ENCODE measurements at regions of chr17 and their contacts with region 1.

Region 1: DNA sequence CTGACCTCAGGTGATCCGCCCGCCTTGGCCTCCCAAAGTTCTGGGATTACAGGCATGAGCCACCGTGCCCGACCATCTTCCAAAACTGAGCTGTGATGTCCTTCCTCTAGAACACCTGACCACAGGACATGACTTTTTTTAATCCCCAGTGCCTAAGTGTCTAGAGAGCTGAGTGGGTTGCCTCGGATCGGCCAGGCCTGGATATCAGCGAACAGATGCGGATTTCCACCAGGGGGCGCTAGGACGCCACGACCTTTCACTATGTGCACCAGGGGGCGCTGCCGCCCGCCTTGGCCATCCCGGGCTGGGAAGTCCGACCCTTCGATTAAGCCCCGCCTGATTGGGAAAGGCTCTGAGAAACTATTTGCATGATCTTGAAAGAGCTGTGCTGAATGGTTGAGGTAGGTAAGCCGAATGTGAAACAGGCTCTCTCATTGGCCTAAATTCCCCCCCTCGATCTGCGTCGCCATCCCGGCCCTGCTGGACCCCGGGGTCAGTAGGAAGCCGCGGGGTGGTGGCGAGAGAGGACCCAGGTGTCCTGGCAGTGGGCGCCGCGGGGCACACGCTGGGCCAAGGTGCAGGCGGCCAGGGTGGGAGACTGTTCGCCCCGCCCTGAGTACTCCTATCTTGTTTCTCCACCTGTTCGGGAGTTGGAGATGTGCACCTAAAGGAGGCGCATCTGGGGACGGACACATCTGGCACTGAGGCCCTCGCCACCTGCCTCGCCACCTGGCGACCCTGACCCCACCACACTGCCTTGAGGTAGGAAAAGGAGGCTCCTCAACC is at the start of gene ACBD4:
- DNase-seq: peak; percentile 98
- H3K4me3 ChIP-seq: peak within 1 kb of the TSS; percentile 3 to 69 (median 53)
- H3K27ac ChIP-seq: peak within 1 kb of the TSS; percentile 14
- H3K4me1 ChIP-seq: peaks cover 17% of the 10 kb centered on the region
- H3K27me3 ChIP-seq: no peaks in the 10 kb centered on the region
- CTCF ChIP-seq: peak; percentile 100
- POLR2A ChIP-seq: peak; percentile 50
- total RNA-seq, gene ACBD4: 6.7 and 7.5 TPM in 2 replicates

Region 2: GRCh38 chr17:44518032-44518431 is 617.4 kb before region 1 on chr17:
- CTCF ChIA-PET with region 1: no interaction called
- POLR2A ChIA-PET with region 1: no interaction called
- dilution Hi-C with region 1: no loop called
- intact Hi-C with region 1: no loop called
- DNase-seq: no peak
- H3K4me3 ChIP-seq: no peak overlapping the region
- H3K27ac ChIP-seq: no peak overlapping the region
- H3K4me1 ChIP-seq: no peaks in the 10 kb centered on the region
- H3K27me3 ChIP-seq: peaks cover 2% of the 10 kb centered on the region in 2 experiments
- CTCF ChIP-seq: no peak
- POLR2A ChIP-seq: no peak

Region 3: DNA sequence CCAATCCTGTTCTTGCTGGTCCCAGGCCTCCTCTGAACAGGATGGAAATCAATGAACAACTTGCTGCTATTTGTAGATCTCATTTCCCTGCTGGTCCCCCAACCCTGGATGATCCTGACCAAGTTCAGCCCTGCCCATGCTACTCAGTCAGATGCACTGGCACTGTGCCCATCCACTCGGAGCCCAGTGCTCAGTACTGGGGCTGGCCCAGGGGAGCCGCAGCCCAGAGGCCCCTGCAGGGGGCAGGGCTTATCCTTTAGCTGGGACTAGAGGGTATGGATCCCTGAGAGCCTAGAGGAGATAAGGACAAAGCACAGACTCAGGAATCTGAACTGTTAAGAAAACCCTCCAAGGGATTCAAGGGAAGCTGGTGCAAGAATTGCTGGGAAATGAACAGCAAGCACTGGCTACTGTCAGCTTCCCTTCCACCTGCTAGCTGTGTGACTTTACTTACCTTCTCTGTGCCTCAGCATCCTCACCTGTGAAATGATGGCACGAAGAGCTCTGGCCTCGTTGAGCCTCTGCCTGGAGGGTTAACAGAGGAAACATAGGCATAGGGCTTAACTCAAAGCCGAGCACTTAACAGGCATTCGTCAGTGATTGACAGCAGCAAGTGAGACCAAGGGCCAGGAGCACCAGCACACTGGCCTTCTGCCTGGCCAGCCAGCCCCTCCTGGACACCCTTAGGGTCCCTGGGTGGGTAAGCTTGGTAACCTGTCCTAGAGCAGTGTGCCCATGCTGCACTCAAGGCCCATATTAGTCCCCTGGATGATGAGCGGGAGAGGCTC is 137.5 kb before region 1 on chr17:
- CTCF ChIA-PET with region 1: no interaction called
- POLR2A ChIA-PET with region 1: no interaction called
- dilution Hi-C with region 1: no loop called
- intact Hi-C with region 1: no loop called
- DNase-seq: no peak
- H3K4me3 ChIP-seq: no peak overlapping the region
- H3K27ac ChIP-seq: no peak overlapping the region
- H3K4me1 ChIP-seq: no peaks in the 10 kb centered on the region
- H3K27me3 ChIP-seq: peaks cover 0 to 16% of the 10 kb centered on the region in 2 experiments
- CTCF ChIP-seq: no peak
- POLR2A ChIP-seq: no peak

Region 4: GRCh38 chr17:45021607-45022287 is 113.6 kb before region 1 on chr17:
- CTCF ChIA-PET with region 1: interaction called, 8 read pairs
- POLR2A ChIA-PET with region 1: no interaction called
- dilution Hi-C with region 1: no loop called
- intact Hi-C with region 1: loop called (anchors 2 kb)
- DNase-seq: peak; percentile 38
- H3K4me3 ChIP-seq: peak overlapping the region in 1 of 3 experiments; percentile 30
- H3K27ac ChIP-seq: no peak overlapping the region
- H3K4me1 ChIP-seq: peaks cover 17% of the 10 kb centered on the region
- H3K27me3 ChIP-seq: no peaks in the 10 kb centered on the region
- CTCF ChIP-seq: peak; percentile 76 to 98
- POLR2A ChIP-seq: no peak

Region 5: GRCh38 chr17:45086865-45087503 is 48.4 kb before region 1 on chr17:
- CTCF ChIA-PET with region 1: no interaction called
- POLR2A ChIA-PET with region 1: no interaction called
- dilution Hi-C with region 1: no loop called
- intact Hi-C with region 1: no loop called
- DNase-seq: no peak
- H3K4me3 ChIP-seq: no peak overlapping the region
- H3K27ac ChIP-seq: no peak overlapping the region
- H3K4me1 ChIP-seq: peaks cover 4% of the 10 kb centered on the region
- H3K27me3 ChIP-seq: no peaks in the 10 kb centered on the region
- CTCF ChIP-seq: no peak
- POLR2A ChIP-seq: no peak

Region 6: DNA sequence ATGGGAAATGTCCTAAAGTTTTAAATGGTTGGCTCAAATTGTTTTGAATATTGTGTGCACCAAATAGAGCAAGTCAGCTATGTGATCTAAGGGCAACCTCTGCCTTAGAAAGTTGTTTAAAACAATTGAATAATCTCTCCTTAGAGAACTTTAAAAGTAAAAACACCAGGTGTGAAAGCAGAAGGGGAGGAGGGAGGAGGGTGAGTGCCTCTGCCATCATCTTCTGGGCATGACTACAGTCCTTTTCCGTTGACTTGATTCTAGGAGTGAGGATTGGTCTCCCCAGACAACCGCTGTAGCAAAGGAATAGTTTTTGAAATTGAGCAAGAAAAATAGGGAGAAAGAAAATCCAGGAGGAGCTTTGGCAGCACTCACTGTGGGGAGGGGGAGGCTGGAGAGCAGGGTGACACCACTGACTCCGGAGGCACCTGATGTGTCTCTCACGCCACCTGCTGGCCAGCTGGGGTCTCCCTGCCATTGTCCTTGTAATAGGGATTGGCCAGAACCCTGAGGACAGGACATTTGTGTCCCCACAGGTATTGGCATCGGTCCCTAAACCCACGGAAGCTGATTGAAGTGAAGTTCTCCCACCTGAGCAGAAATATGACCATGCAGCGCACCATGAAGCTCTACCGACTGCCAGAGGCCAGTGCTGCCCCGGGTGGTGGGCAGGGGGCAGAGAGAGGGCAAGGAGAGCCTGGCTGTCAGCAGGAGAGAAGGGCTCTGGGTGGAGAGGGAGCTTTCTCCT is 36.3 kb before region 1 on chr17:
- CTCF ChIA-PET with region 1: interaction called, 26 read pairs
- POLR2A ChIA-PET with region 1: no interaction called
- dilution Hi-C with region 1: no loop called
- intact Hi-C with region 1: loop called (anchors 1 kb)
- DNase-seq: peak; percentile 73
- H3K4me3 ChIP-seq: no peak overlapping the region
- H3K27ac ChIP-seq: no peak overlapping the region
- H3K4me1 ChIP-seq: peaks cover under 1% of the 10 kb centered on the region
- H3K27me3 ChIP-seq: no peaks in the 10 kb centered on the region
- CTCF ChIP-seq: peak; percentile 84 to 91
- POLR2A ChIP-seq: no peak

Region 7: GRCh38 chr17:45148183-45149036 is 13.0 kb after region 1 on chr17 and contains the start of gene HEXIM1:
- CTCF ChIA-PET with region 1: interaction called, 393 read pairs
- POLR2A ChIA-PET with region 1: interaction called, 58 read pairs
- dilution Hi-C with region 1: no loop called
- intact Hi-C with region 1: loop called (anchors 1 kb)
- DNase-seq: peak; percentile 100
- H3K4me3 ChIP-seq: peak within 1 kb of the TSS; percentile 68 to 95 (median 90)
- H3K27ac ChIP-seq: peak within 1 kb of the TSS; percentile 97
- H3K4me1 ChIP-seq: peaks cover 24% of the 10 kb centered on the region
- H3K27me3 ChIP-seq: no peaks in the 10 kb centered on the region
- CTCF ChIP-seq: no peak
- POLR2A ChIP-seq: peak; percentile 100
- total RNA-seq, gene HEXIM1: 20.0 and 20.6 TPM in 2 replicates

Region 8: DNA sequence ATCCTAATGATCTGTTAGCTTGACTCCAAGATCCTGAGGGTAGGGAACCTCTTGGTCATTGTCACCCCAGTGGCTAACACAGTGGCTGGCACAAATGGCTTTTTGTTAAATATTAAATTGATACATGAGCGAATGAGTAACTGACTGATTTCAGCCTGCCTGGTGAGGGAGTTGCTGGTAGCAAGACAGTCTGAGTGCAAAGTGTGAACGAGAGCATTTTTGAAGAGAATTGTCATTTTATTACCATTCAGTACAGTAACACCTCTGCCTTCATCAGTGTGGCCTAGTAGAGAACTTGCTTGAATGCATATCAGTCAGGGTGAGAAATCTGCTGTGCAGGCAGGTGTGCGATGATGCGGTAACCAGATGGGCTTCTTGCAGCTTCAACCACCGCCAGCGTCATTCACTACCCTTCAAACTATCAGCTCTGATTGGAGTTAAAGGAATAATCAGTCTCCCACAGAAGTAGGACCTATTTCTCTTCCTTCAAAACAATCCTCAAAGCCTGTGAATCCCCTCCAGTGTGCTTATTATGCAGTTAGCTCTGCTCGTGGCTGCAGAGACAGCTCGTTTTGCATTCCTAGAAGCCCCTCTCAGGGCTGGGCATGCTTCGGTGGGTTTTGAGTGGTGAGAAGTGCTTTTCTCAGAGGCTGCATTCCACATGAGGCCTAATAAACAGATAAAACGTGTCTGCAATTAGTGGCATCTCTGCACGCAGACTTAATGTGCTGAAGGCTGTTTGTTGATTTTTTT is 55.3 kb after region 1 on chr17:
- CTCF ChIA-PET with region 1: interaction called, 476 read pairs
- POLR2A ChIA-PET with region 1: no interaction called
- dilution Hi-C with region 1: no loop called
- intact Hi-C with region 1: no loop called
- DNase-seq: no peak
- H3K4me3 ChIP-seq: no peak overlapping the region
- H3K27ac ChIP-seq: no peak overlapping the region
- H3K4me1 ChIP-seq: no peaks in the 10 kb centered on the region
- H3K27me3 ChIP-seq: no peaks in the 10 kb centered on the region
- CTCF ChIP-seq: no peak
- POLR2A ChIP-seq: no peak

Region 9: DNA sequence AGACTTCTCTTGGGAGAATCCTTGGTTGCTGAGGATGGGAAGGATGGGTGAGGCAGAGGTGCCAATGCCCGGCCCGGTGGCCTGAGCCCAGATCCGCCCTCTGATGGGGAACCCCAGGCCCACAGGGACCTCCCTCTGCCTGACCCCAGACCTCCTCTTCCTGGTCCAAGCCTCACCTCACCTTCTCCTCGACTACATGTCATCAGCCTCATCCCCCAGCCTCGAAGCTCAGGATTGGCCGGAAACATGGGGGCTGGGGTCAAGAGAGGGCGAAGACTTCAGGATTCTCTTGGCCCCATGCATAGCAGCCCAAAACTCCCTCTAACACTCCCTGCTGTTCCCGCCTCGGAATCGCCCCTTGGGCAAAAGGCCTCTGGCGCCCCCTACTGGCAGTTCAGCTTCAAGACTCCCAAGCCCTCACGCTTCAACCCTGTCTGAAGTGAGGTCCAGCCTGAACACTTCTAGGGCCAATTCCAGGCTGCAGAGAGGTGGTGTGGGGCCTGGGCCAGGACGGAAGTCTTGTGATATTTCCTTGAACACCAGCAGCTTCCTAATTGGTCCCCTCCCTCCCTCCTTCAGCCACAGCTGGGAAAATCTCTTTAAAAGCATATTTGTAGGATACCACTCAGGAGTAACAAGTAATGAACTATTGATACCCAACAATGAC is 250.1 kb after region 1 on chr17:
- CTCF ChIA-PET with region 1: interaction called, 12 read pairs
- POLR2A ChIA-PET with region 1: no interaction called
- dilution Hi-C with region 1: no loop called
- intact Hi-C with region 1: no loop called
- DNase-seq: peak; percentile 77
- H3K4me3 ChIP-seq: no peak overlapping the region
- H3K27ac ChIP-seq: no peak overlapping the region
- H3K4me1 ChIP-seq: no peaks in the 10 kb centered on the region
- H3K27me3 ChIP-seq: peaks cover 0 to 6% of the 10 kb centered on the region in 2 experiments
- CTCF ChIP-seq: peak; percentile 94 to 97
- POLR2A ChIP-seq: no peak

Measured in endothelial cell of umbilical vein (primary cell).